CD8-positive, alpha-beta T cell (primary cell): ENCODE measurements at regions of chr2 and their contacts with region 1.

Region 1: GRCh38 chr2:183680573-183680972 is 556.3 kb downstream of the NUP35 start:
- DNase-seq: no peak
- ATAC-seq: no peak
- H3K4me3 ChIP-seq: no peak overlapping the region
- H3K4me3 Mint-ChIP-seq: no peak overlapping the region
- H3K27ac ChIP-seq: no peak overlapping the region
- H3K27ac Mint-ChIP-seq: no peak overlapping the region
- H3K4me1 ChIP-seq: no peaks in the 10 kb centered on the region
- H3K4me1 Mint-ChIP-seq: no peaks in the 10 kb centered on the region
- H3K27me3 ChIP-seq: no peaks in the 10 kb centered on the region
- H3K27me3 Mint-ChIP-seq: no peaks in the 10 kb centered on the region
- CTCF ChIP-seq: no peak

Region 2: DNA sequence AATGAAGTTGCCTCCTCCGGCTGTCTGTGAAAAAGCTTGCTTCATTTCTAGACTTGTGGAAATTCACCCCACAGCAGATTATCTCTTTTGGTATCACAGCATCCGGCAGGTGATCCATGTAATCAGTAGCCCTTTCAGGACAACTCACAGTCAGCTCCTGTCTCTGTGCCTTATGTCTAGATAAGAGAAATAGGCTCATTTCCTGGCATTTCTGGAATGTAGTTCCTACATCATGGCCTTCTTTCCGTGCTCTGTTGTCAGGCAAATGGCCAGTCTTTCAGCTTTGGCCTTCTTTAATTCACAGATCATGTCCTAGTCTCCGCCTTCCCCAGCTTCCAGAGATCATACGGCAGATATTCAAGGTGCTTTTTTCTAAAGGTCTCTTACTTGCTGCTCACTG is 100.9 kb before region 1 on chr2:
- CTCF ChIA-PET with region 1: no interaction called
- POLR2A ChIA-PET with region 1: no interaction called
- intact Hi-C with region 1: no loop called
- DNase-seq: no peak
- ATAC-seq: no peak
- H3K4me3 ChIP-seq: no peak overlapping the region
- H3K4me3 Mint-ChIP-seq: no peak overlapping the region
- H3K27ac ChIP-seq: no peak overlapping the region
- H3K27ac Mint-ChIP-seq: no peak overlapping the region
- H3K4me1 ChIP-seq: no peaks in the 10 kb centered on the region
- H3K4me1 Mint-ChIP-seq: no peaks in the 10 kb centered on the region
- H3K27me3 ChIP-seq: no peaks in the 10 kb centered on the region
- H3K27me3 Mint-ChIP-seq: no peaks in the 10 kb centered on the region
- CTCF ChIP-seq: no peak

Region 3: DNA sequence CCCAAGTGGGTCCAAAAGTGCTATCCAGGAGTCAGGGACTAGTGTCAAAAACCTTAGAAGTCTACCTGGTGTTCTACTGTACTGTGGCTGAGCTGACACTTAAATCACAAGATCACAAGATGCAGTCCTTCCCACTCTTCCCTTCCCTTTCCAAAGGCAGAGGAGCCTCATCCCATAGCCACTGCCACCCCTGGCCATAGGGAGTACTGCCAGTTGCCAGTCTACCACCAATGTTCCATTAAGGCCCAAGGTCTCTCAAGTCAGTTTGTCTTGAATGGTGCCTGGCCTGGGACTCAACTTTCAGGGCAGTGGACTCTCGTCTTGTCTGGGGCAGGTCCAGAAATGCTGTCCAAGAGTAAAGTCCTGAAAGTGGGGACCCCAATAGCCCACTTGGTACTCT is 29.3 kb after region 1 on chr2:
- CTCF ChIA-PET with region 1: no interaction called
- POLR2A ChIA-PET with region 1: no interaction called
- intact Hi-C with region 1: loop called in 1 of 2 experiments (anchors 1 kb)
- DNase-seq: no peak
- ATAC-seq: no peak
- H3K4me3 ChIP-seq: no peak overlapping the region
- H3K4me3 Mint-ChIP-seq: no peak overlapping the region
- H3K27ac ChIP-seq: no peak overlapping the region
- H3K27ac Mint-ChIP-seq: no peak overlapping the region
- H3K4me1 ChIP-seq: no peaks in the 10 kb centered on the region
- H3K4me1 Mint-ChIP-seq: no peaks in the 10 kb centered on the region
- H3K27me3 ChIP-seq: no peaks in the 10 kb centered on the region
- H3K27me3 Mint-ChIP-seq: no peaks in the 10 kb centered on the region
- CTCF ChIP-seq: no peak

Region 4: GRCh38 chr2:184562532-184562931 is 882.0 kb after region 1 on chr2:
- CTCF ChIA-PET with region 1: no interaction called
- POLR2A ChIA-PET with region 1: no interaction called
- intact Hi-C with region 1: no loop called
- DNase-seq: peak in 1 of 9 experiments; percentile 9
- ATAC-seq: no peak
- H3K4me3 ChIP-seq: no peak overlapping the region
- H3K4me3 Mint-ChIP-seq: no peak overlapping the region
- H3K27ac ChIP-seq: no peak overlapping the region
- H3K27ac Mint-ChIP-seq: no peak overlapping the region
- H3K4me1 ChIP-seq: no peaks in the 10 kb centered on the region
- H3K4me1 Mint-ChIP-seq: no peaks in the 10 kb centered on the region
- H3K27me3 ChIP-seq: no peaks in the 10 kb centered on the region
- H3K27me3 Mint-ChIP-seq: no peaks in the 10 kb centered on the region
- CTCF ChIP-seq: no peak